ENCODE measurements at regions of chr17 and their contacts with region 1.

Region 1: DNA sequence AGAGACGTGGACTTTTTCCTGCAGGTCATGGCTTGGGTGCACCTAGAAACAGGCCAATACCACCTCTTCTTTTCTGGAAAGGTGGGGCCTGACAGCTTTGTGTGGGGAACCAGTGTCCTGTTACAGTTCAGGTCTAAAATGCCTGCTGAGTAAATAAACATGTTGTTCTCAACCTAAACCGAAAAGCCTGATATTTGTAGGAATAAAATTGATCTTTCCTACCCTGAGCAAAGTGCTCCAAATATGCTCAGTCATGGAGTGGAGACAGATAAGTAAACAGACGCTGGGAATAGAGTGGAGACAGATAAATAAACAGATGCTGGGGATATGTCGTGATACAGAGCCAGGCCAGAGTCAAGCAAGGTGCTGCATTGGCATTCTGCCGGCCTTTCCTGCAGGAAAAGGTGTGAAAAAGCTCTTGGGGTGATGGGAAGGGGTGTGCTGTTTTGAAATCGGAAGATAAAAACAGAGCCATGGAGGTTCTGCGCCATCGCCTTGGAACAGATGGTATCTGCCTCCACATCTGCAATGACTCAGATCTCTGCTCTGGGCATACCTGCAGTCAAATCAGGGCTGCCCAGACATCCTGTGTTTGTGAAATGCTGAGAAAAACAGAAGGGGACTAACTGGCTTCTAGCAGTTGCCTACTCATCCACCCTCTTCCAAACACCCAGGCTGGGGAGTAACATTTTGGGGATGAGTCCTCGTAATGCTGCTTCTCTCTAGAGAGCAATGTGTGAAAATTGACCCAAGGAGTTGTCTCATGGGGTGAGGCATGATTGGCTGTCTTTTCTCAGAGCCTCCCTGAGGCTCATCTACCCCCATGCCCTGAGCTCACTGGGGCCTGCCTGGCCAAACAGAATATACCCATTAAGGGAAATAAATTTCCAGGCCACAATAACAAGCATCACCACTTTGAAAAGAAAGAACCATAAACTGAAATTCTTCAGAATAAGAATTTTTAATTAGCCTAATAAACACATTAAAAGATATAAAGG is 16.8 kb upstream of the TRPV2 start:
- DNase-seq: peak; percentile 75 to 76
- H3K4me3 ChIP-seq: no peak overlapping the region
- H3K27ac ChIP-seq: peak overlapping the region; percentile 48
- H3K4me1 ChIP-seq: peaks cover 9% of the 10 kb centered on the region
- H3K27me3 ChIP-seq: no peaks in the 10 kb centered on the region
- CTCF ChIP-seq: no peak

Region 2: DNA sequence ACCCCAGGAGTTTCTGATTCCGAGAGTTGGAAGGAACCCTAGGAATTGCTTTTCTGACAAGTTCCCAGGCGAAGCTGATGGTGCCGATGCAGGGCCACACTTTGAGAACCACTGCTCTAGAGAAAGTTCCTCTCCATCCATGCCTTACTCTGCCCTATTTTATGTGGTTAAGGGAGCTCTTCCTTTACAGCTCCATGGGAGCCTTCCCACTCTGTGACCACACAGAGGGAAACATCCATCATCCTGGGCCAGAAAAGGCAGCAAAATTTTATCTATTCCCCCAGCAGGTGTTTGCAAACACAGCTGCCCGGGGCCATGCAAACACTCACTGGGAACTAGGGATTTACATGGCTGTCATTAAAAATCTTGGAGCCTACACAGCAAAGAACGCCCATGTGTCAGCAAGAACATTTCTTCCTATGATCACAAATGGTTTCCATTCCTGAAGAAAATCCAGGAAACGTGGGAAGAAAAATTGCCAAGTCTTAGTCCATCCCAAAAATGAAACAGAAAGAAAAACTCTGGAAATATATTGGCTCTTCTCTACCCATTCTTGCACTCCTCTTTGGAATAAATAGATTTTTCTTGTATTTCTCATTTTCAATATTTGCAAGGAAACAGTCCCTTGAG is 1386.1 kb before region 1 on chr17:
- CTCF ChIA-PET with region 1: no interaction called
- POLR2A ChIA-PET with region 1: no interaction called
- intact Hi-C with region 1: no loop called
- DNase-seq: no peak
- H3K4me3 ChIP-seq: no peak overlapping the region
- H3K27ac ChIP-seq: no peak overlapping the region
- H3K4me1 ChIP-seq: no peaks in the 10 kb centered on the region
- H3K27me3 ChIP-seq: no peaks in the 10 kb centered on the region; the same call in 1 of the 2 replicates
- CTCF ChIP-seq: no peak

Region 3: DNA sequence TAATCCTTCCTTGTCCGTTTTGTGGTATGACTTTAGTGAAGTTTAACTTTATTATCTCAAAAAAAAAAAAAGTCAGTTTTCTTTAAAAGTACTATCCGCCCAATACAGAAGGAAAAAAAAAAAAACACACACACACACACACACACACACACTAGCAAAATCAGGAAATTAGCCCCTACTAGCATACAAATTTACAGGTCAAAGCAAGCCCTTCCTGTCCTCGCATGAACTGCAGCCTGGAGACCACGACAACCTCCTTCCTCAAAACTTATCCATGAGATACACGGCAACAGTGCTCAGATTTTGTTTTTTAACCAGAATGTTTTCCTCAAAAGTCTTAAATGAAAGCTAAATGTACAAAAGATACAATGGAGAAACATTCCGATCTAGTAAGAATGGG is 199.5 kb before region 1 on chr17:
- CTCF ChIA-PET with region 1: interaction called, 11 read pairs
- POLR2A ChIA-PET with region 1: no interaction called
- intact Hi-C with region 1: no loop called
- DNase-seq: no peak
- H3K4me3 ChIP-seq: no peak overlapping the region
- H3K27ac ChIP-seq: no peak overlapping the region
- H3K4me1 ChIP-seq: 0 out of 2 replicates have a peak, but pooled peaks cover 8% of the 10 kb centered on the region
- H3K27me3 ChIP-seq: no peaks in the 10 kb centered on the region
- CTCF ChIP-seq: no peak

Region 4: GRCh38 chr17:16463358-16464302 is 65.1 kb after region 1 on chr17:
- CTCF ChIA-PET with region 1: no interaction called
- POLR2A ChIA-PET with region 1: no interaction called
- intact Hi-C with region 1: no loop called
- DNase-seq: peak in 1 of 2 experiments; percentile 47
- H3K4me3 ChIP-seq: no peak overlapping the region
- H3K27ac ChIP-seq: no peak overlapping the region
- H3K4me1 ChIP-seq: peaks cover 10% of the 10 kb centered on the region
- H3K27me3 ChIP-seq: no peaks in the 10 kb centered on the region
- CTCF ChIP-seq: no peak

Region 5: GRCh38 chr17:16512011-16512410 is 113.4 kb after region 1 on chr17:
- CTCF ChIA-PET with region 1: no interaction called
- POLR2A ChIA-PET with region 1: interaction called, 10 read pairs
- intact Hi-C with region 1: no loop called
- DNase-seq: no peak
- H3K4me3 ChIP-seq: no peak overlapping the region
- H3K27ac ChIP-seq: no peak overlapping the region
- H3K4me1 ChIP-seq: peaks cover 9% of the 10 kb centered on the region
- H3K27me3 ChIP-seq: no peaks in the 10 kb centered on the region
- CTCF ChIP-seq: no peak